ENCODE measurements at regions of chr2 and their contacts with region 1.

Region 1: DNA sequence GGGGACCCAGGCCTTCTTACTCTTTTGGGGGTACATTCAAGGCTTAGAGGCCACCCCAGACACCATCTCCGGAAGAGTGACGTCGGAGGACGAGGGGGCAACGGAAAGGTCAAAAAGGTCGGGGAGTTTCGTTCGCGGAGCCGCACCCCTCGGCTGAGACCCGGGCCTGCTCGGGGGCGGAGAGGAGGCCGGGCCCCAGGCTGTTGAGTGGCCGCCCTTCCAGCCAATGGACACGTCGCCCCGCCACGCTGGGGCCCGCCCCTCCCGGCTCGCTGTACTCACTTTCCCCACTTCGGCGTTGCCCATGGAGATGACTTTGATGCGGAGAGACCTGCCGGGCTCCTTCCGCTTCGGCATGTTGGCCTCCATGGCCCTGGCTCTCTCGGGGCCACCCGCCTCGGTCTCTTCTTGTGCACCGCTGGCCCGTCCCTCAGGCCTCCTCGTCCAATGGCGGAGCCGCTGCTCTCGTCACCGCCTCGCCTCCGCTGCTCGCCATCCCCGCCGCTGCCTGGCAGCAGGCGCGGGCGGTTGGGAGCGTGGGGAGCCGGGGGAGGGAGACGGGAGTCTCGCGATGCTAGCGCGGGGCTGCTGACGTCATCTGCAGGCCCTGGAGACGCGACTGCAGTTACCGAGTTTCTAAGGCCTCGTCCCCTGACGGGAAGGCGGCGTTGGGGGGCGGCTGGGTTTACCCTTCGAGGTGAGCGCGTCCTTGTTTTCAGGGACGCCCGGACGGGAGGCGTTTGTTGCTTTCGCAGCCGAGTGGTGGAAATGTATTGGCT is at the start of gene DNAJC27:
- DNase-seq: peak; percentile 93 to 99 (median 97)
- ATAC-seq: peak; percentile 85
- H3K4me3 ChIP-seq: peak within 1 kb of the TSS; percentile 95
- H3K4me3 Mint-ChIP-seq: peak within 1 kb of the TSS; percentile 97
- H3K27ac ChIP-seq: peak within 1 kb of the TSS; percentile 98 to 99
- H3K27ac Mint-ChIP-seq: peak within 1 kb of the TSS; percentile 100
- H3K4me1 ChIP-seq: peaks cover 20% of the 10 kb centered on the region
- H3K4me1 Mint-ChIP-seq: peaks cover 32% of the 10 kb centered on the region
- H3K27me3 ChIP-seq: no peaks in the 10 kb centered on the region
- H3K27me3 Mint-ChIP-seq: no peaks in the 10 kb centered on the region
- CTCF ChIP-seq: no peak
- total RNA-seq, gene DNAJC27: 20.0 to 23.1 TPM

Region 2: DNA sequence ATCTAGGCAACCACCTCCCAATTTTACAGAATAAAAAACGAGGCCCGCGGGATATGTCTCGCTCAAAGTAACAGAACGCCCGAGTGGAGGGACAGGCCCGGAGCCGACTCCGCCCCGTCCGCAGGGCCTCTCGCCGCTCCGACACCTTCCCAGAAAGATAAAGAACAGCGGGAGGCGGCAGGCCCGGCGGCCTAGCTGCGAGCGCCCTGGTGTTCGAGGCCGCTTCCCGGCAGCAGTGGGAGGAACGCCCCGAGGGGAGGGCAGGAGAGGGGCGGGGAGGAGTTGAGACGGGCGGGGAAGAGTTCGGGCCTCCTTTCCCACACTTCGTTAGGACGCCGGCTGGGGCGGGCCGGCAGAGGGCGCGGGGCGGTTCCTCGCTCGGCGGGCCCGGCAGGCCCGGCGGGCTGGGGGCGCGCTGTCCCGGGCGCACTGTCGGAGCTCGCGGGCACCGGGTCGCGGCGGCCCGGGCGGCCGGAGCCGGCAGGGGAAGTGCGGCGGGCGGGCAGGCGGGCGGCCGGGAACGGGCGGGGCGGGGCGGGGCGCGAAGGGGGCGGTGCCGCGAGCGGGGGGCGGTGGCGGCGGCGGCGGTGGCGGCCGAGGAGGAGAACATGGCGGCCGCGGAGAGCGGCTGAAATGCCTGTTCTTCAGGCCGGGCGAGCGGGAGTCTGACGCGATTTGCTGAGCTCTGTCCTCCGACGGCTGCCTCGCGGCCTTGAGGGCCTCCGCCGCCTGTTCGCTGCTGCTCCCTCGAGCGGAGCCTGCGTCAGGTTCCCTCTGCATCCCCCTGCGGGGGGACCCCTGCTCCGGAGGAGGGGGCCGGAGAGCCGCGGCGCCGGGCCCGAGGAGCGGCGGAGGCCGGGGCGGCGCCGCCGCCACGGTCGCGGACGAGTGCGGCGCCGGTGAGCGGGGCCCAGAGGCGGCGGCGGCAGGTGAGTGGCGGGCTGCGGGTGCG is 480.8 kb before region 1 on chr2 and contains the start of gene NCOA1:
- CTCF ChIA-PET with region 1: no interaction called
- POLR2A ChIA-PET with region 1: no interaction called
- intact Hi-C with region 1: loop called in 1 of 2 experiments (anchors 5 kb)
- DNase-seq: peak; percentile 83 to 95 (median 88)
- ATAC-seq: peak; percentile 85
- H3K4me3 ChIP-seq: peak within 1 kb of the TSS; percentile 60
- H3K4me3 Mint-ChIP-seq: peak within 1 kb of the TSS; percentile 92
- H3K27ac ChIP-seq: peak within 1 kb of the TSS; percentile 76 to 81
- H3K27ac Mint-ChIP-seq: peak within 1 kb of the TSS; percentile 94
- H3K4me1 ChIP-seq: peaks cover 34% of the 10 kb centered on the region
- H3K4me1 Mint-ChIP-seq: peaks cover 66% of the 10 kb centered on the region
- H3K27me3 ChIP-seq: no peaks in the 10 kb centered on the region
- H3K27me3 Mint-ChIP-seq: no peaks in the 10 kb centered on the region
- CTCF ChIP-seq: no peak
- total RNA-seq, gene NCOA1: 35.5 to 40.6 TPM

Region 3: DNA sequence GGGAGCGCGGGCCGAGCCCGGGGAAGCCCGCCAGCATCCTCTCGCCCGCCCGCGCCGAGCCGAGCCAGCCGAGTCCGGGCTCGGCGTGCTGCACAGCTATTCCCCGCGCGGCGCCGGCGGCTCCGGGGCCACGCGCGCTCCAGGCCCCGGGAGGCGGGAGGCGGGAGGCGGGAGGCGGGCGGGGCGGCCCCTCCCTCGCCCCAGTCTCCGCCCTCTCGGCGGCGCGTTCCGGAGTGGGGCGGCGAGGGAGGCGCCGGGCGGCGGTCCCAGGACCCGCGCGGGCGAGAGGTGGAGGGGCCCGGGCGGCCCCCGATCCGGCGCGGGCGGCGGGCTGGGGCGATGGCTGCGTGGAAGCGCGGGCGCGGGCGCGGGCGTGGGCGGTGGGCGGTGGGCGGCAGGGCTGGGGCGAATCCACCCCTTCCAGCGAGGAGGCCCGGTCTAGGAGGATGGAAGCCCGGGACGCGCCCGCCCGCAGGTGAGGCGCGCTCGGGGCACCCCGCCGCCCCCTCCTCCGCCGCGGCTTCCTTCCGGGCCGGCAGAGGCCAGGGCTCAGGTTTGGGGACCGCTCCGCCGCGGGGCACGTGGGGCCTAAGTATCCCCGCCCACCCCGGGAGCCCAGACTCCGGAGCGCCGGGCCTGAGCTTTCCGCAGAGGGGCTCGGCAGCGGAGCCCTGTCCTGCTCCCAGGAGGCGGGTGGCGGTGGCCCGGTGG is 51.5 kb before region 1 on chr2 and contains the start of gene ADCY3:
- CTCF ChIA-PET with region 1: no interaction called
- POLR2A ChIA-PET with region 1: interaction called, 4 read pairs
- intact Hi-C with region 1: loop called in 1 of 2 experiments (anchors 1 kb)
- DNase-seq: peak; percentile 26 to 85 (median 52)
- ATAC-seq: peak; percentile 62
- H3K4me3 ChIP-seq: peak within 1 kb of the TSS; percentile 60
- H3K4me3 Mint-ChIP-seq: peak within 1 kb of the TSS; percentile 97
- H3K27ac ChIP-seq: peak within 1 kb of the TSS in 1 of 2 donors; percentile 40
- H3K27ac Mint-ChIP-seq: peak within 1 kb of the TSS; percentile 69
- H3K4me1 ChIP-seq: peaks cover 37% of the 10 kb centered on the region
- H3K4me1 Mint-ChIP-seq: peaks cover 34% of the 10 kb centered on the region
- H3K27me3 ChIP-seq: no peaks in the 10 kb centered on the region
- H3K27me3 Mint-ChIP-seq: no peaks in the 10 kb centered on the region
- CTCF ChIP-seq: no peak
- total RNA-seq, gene ADCY3: 28.1 to 31.4 TPM

Region 4: GRCh38 chr2:25009954-25010353 is 38.2 kb after region 1 on chr2:
- CTCF ChIA-PET with region 1: no interaction called
- POLR2A ChIA-PET with region 1: no interaction called
- intact Hi-C with region 1: no loop called
- DNase-seq: no peak
- ATAC-seq: no peak
- H3K4me3 ChIP-seq: no peak overlapping the region
- H3K4me3 Mint-ChIP-seq: no peak overlapping the region
- H3K27ac ChIP-seq: no peak overlapping the region
- H3K27ac Mint-ChIP-seq: no peak overlapping the region
- H3K4me1 ChIP-seq: no peaks in the 10 kb centered on the region
- H3K4me1 Mint-ChIP-seq: no peaks in the 10 kb centered on the region
- H3K27me3 ChIP-seq: no peaks in the 10 kb centered on the region
- H3K27me3 Mint-ChIP-seq: no peaks in the 10 kb centered on the region
- CTCF ChIP-seq: no peak

Region 5: GRCh38 chr2:25131567-25132298 is 160.0 kb after region 1 on chr2:
- CTCF ChIA-PET with region 1: interaction called, 54 read pairs
- POLR2A ChIA-PET with region 1: interaction called, 6 read pairs
- intact Hi-C with region 1: loop called (anchors 1 kb)
- DNase-seq: peak in 5 of 14 experiments; percentile 3 to 30 (median 11)
- ATAC-seq: peak; percentile 62
- H3K4me3 ChIP-seq: peak overlapping the region; percentile 25
- H3K4me3 Mint-ChIP-seq: peak overlapping the region; percentile 76
- H3K27ac ChIP-seq: no peak overlapping the region
- H3K27ac Mint-ChIP-seq: no peak overlapping the region
- H3K4me1 ChIP-seq: peaks cover 15% of the 10 kb centered on the region
- H3K4me1 Mint-ChIP-seq: peaks cover 14% of the 10 kb centered on the region
- H3K27me3 ChIP-seq: peaks cover 38 to 58% of the 10 kb centered on the region in 2 experiments
- H3K27me3 Mint-ChIP-seq: peaks cover 63% of the 10 kb centered on the region
- CTCF ChIP-seq: no peak

Region 6: DNA sequence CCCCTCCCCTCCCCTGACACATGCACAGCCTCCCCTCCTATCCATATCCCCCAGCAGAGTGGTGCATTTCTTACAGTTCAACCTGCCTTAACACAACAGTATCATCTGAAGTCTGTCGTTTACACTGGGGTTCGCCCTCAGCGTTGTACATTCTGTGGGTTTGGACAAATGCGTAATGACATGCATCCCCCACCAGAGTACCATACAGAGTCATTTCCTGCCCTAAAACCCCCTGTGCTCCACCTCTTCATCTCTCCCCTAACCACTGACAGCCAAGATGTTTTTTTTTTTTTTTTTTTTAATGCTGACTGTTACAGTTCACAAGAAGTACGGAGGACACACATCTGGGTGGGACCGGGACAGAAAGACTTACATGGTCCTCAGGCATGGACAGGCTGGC is 174.1 kb after region 1 on chr2:
- CTCF ChIA-PET with region 1: no interaction called
- POLR2A ChIA-PET with region 1: no interaction called
- intact Hi-C with region 1: no loop called
- DNase-seq: peak in 1 of 14 experiments; percentile 19
- ATAC-seq: peak; percentile 74
- H3K4me3 ChIP-seq: no peak overlapping the region
- H3K4me3 Mint-ChIP-seq: no peak overlapping the region
- H3K27ac ChIP-seq: no peak overlapping the region
- H3K27ac Mint-ChIP-seq: no peak overlapping the region
- H3K4me1 ChIP-seq: no peaks in the 10 kb centered on the region
- H3K4me1 Mint-ChIP-seq: no peaks in the 10 kb centered on the region
- H3K27me3 ChIP-seq: peaks cover 0 to 2% of the 10 kb centered on the region in 2 experiments
- H3K27me3 Mint-ChIP-seq: no peaks in the 10 kb centered on the region
- CTCF ChIP-seq: no peak

Region 7: DNA sequence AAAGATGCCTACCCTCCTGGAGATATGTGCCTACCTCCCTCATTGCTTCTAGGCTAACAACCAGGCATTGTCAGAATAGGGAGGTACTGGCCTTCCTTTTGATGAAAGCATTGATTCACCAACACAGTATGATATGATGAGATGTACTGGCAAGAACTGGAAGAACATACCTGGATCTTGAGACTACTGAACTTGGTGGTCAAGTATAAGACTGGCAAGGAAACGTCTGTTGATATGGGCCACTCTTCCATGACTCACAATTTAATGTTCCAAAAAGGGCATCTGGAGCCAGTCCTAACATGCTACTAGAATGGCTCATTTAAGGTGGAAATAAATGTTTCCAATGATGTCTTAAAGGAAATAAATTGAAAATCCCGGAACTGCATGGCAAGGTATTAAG is 683.6 kb after region 1 on chr2:
- CTCF ChIA-PET with region 1: no interaction called
- POLR2A ChIA-PET with region 1: no interaction called
- intact Hi-C with region 1: no loop called
- DNase-seq: no peak
- ATAC-seq: no peak
- H3K4me3 ChIP-seq: no peak overlapping the region
- H3K4me3 Mint-ChIP-seq: no peak overlapping the region
- H3K27ac ChIP-seq: no peak overlapping the region
- H3K27ac Mint-ChIP-seq: no peak overlapping the region
- H3K4me1 ChIP-seq: no peaks in the 10 kb centered on the region
- H3K4me1 Mint-ChIP-seq: peaks cover 44% of the 10 kb centered on the region
- H3K27me3 ChIP-seq: no peaks in the 10 kb centered on the region
- H3K27me3 Mint-ChIP-seq: no peaks in the 10 kb centered on the region
- CTCF ChIP-seq: no peak

Region 8: GRCh38 chr2:25673300-25674076 is 701.8 kb after region 1 on chr2 and contains the start of gene DTNB:
- CTCF ChIA-PET with region 1: no interaction called
- POLR2A ChIA-PET with region 1: no interaction called
- intact Hi-C with region 1: loop called in 1 of 2 experiments (anchors 10 kb)
- DNase-seq: peak; percentile 58 to 92 (median 76)
- ATAC-seq: peak; percentile 75
- H3K4me3 ChIP-seq: peak within 1 kb of the TSS; percentile 84
- H3K4me3 Mint-ChIP-seq: peak within 1 kb of the TSS; percentile 91
- H3K27ac ChIP-seq: peak within 1 kb of the TSS; percentile 43 to 66
- H3K27ac Mint-ChIP-seq: peak within 1 kb of the TSS; percentile 85
- H3K4me1 ChIP-seq: peaks cover 23% of the 10 kb centered on the region
- H3K4me1 Mint-ChIP-seq: peaks cover 35% of the 10 kb centered on the region
- H3K27me3 ChIP-seq: peaks cover 0 to 2% of the 10 kb centered on the region in 2 experiments
- H3K27me3 Mint-ChIP-seq: no peaks in the 10 kb centered on the region
- CTCF ChIP-seq: no peak
- total RNA-seq, gene DTNB: 30.1 to 33.6 TPM

Measured in CD4-positive, alpha-beta T cell (primary cell).